Esophagus muscularis mucosa (tissue), 4 donors: ENCODE measurements at regions of chr1 and their contacts with region 1.

Region 1: GRCh38 chr1:53393325-53393792 is 65.5 kb upstream of the LRP8 start:
- DNase-seq: peak; percentile 97
- H3K4me3 ChIP-seq: no peak overlapping the region
- H3K27ac ChIP-seq: no peak overlapping the region
- H3K4me1 ChIP-seq: no peaks in the 10 kb centered on the region
- H3K27me3 ChIP-seq: peaks cover 0 to 32% (median 0%) of the 10 kb centered on the region in 4 donors
- CTCF ChIP-seq: peak; percentile 88 to 95 (median 92)
- EP300 ChIP-seq: no peak
- POLR2A ChIP-seq: no peak

Region 2: DNA sequence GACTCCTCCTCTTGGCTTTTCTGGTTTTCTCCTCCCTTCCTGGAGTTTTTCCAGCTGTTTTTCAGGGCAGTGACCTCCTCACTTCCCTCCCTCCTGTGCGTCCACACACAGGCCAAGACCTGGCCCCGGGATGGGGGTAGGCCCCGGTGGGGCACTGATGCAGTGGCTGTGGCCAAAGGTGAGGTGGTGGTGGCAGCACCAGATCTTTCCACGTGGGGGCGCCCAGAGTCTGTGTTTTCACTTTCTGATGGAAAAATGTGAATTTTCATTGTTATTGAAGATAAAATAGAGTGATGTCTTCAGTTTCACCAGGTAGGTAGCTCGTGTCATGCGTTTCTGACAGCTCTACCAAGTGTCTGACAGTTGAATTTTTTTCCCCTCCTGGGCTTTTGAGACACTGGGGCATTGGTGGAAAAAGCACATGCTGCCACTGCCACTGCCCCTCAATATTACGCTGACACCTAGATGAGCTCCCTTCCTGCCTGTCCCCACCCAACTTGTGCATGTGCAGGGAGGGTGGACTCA is 115.1 kb before region 1 on chr1:
- intact Hi-C with region 1: loop called (anchors 1 kb)
- DNase-seq: no peak
- H3K4me3 ChIP-seq: no peak overlapping the region
- H3K27ac ChIP-seq: no peak overlapping the region
- H3K4me1 ChIP-seq: no peaks in the 10 kb centered on the region
- H3K27me3 ChIP-seq: peaks cover 0 to 9% (median 0%) of the 10 kb centered on the region in 4 donors
- CTCF ChIP-seq: peak; percentile 87 to 94 (median 91)
- EP300 ChIP-seq: no peak
- POLR2A ChIP-seq: no peak

Region 3: DNA sequence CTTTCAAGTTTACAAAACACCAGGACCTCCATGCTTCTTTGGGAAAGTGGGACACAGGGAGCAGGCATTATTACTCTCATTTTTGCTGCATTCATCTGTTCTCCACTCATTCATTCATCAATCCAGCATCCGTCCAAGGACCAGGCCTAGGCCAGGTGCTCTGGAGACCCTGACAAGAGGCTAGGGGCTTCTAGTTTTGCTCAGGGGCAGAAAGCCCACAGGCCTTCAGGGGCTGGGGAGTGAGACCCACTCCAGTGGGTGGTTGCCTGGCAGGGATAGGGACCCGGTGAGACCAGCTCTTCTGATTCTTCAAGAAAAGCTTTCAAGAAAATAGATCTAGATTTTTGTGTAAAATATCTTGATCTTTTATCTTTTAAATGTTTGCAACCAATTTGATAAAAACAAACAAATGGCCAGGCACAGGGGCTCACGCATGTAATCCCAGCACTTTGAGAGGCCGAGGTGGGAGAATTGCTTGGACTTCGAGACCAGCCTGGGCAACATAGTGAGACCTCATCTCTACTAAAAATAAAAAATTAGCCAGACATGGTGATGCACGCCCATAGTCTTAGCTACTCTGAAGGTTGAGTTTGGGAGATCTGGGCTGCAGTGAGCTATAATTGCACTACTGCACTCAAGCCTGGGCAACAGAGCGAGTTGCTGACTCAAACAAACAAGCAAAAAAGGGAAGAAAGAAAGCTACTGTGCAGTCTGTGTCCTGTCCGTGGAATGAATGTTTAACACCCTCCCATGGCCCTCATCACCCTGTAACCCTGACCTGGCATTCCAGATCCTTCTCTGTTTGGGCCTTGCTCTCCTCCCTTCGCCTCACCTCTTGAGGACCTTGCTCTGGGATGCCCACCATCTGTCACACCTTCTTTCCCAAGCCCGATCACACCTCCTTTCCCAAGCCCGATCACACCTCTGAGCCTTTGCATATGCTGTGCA is 48.2 kb before region 1 on chr1:
- intact Hi-C with region 1: no loop called
- DNase-seq: peak; percentile 64
- H3K4me3 ChIP-seq: no peak overlapping the region
- H3K27ac ChIP-seq: no peak overlapping the region
- H3K4me1 ChIP-seq: no peaks in the 10 kb centered on the region
- H3K27me3 ChIP-seq: peaks cover 0 to 35% (median 0%) of the 10 kb centered on the region in 4 donors
- CTCF ChIP-seq: no peak
- EP300 ChIP-seq: no peak
- POLR2A ChIP-seq: no peak